Pancreas (tissue), 10 donors: ENCODE measurements at regions of chr18 and their contacts with region 1.

Region 1: GRCh38 chr18:26548429-26549262 is at the start of gene KCTD1:
- DNase-seq: peak; percentile 81 to 95 (median 86)
- ATAC-seq: peak; percentile 62 to 81 (median 70)
- H3K4me3 ChIP-seq: peak within 1 kb of the TSS; percentile 71 to 86 (median 76)
- H3K27ac ChIP-seq: peak within 1 kb of the TSS; percentile 53 to 85 (median 74)
- H3K4me1 ChIP-seq: peaks cover 0 to 32% (median 20%) of the 10 kb centered on the region in 3 donors
- H3K27me3 ChIP-seq: no peaks in the 10 kb centered on the region
- CTCF ChIP-seq: no peak
- total RNA-seq, gene KCTD1: 6.8 to 16.8 (median 9.0) TPM

Region 2: GRCh38 chr18:26487437-26487836 is 61.2 kb before region 1 on chr18:
- intact Hi-C with region 1: loop called in 1 of 3 experiments (anchors 10 kb)
- DNase-seq: no peak
- ATAC-seq: peak in 3 of 4 donors; percentile 56 to 76 (median 73)
- H3K4me3 ChIP-seq: no peak overlapping the region
- H3K27ac ChIP-seq: no peak overlapping the region
- H3K4me1 ChIP-seq: no peaks in the 10 kb centered on the region
- H3K27me3 ChIP-seq: no peaks in the 10 kb centered on the region
- CTCF ChIP-seq: no peak